ENCODE measurements at regions of chrX and their contacts with region 1.

Region 1: DNA sequence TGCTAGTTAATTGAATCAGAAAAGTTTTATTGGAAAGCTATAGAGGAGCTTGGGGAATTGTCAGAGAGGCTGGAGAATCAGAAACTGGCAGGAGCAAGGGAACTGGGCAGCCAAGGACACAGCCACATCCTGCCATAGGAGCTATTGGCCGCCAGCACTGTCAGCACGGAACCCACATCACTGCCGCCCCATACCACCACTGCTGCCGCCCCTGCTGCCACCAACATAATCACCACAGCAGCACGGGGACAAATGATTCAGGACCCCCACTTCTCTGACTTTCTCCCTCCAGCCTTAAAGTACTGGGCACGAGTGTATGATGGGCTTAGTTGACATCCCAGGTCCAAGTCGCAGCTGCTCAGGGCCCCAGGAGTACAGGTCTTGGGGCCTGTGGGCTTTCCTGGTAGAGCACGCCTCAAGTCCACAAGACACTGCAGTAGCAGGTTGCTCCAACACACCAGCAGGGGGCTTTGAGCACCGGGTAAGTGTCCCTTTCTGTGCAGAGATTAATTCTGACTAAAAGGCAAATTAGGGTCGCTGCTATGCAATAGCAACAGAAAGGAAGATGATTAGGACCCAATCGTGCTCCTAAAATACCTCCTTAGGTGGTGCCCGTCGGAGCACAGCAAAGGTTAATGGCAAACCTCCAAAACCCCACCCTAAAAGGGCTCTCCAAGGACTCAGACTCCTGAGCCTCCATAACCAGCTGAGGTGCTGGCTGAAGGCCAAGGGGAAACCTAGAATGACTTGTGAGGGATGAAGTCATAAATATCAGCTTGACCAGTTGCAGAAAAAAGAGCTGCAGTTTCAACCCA is 6.9 kb downstream of the PJA1 start:
- DNase-seq: peak; percentile 85
- H3K4me3 ChIP-seq: no peak overlapping the region
- H3K27ac ChIP-seq: peak overlapping the region in 3 of 4 donors; percentile 22 to 34 (median 30)
- H3K4me1 ChIP-seq: peaks cover 0 to 18% (median 11%) of the 10 kb centered on the region in 4 donors
- H3K27me3 ChIP-seq: no peaks in the 10 kb centered on the region
- CTCF ChIP-seq: peak; percentile 18 to 51 (median 32)
- EP300 ChIP-seq: no peak
- POLR2A ChIP-seq: no peak

Region 2: GRCh38 chrX:69093960-69094871 is 64.2 kb before region 1 on chrX:
- intact Hi-C with region 1: no loop called
- DNase-seq: peak; percentile 74
- H3K4me3 ChIP-seq: no peak overlapping the region
- H3K27ac ChIP-seq: no peak overlapping the region
- H3K4me1 ChIP-seq: no peaks in the 10 kb centered on the region
- H3K27me3 ChIP-seq: no peaks in the 10 kb centered on the region
- CTCF ChIP-seq: peak in 2 of 4 experiments; percentile 40 to 49
- EP300 ChIP-seq: no peak
- POLR2A ChIP-seq: no peak

Region 3: GRCh38 chrX:69109683-69110082 is 48.7 kb before region 1 on chrX:
- intact Hi-C with region 1: no loop called
- DNase-seq: no peak
- H3K4me3 ChIP-seq: no peak overlapping the region
- H3K27ac ChIP-seq: peak overlapping the region in 2 of 4 donors; percentile 37 to 41
- H3K4me1 ChIP-seq: peaks cover 0 to 11% (median 5%) of the 10 kb centered on the region in 4 donors
- H3K27me3 ChIP-seq: peaks cover 0 to 3% (median 0%) of the 10 kb centered on the region in 3 donors
- CTCF ChIP-seq: no peak
- EP300 ChIP-seq: no peak
- POLR2A ChIP-seq: no peak

Region 4: DNA sequence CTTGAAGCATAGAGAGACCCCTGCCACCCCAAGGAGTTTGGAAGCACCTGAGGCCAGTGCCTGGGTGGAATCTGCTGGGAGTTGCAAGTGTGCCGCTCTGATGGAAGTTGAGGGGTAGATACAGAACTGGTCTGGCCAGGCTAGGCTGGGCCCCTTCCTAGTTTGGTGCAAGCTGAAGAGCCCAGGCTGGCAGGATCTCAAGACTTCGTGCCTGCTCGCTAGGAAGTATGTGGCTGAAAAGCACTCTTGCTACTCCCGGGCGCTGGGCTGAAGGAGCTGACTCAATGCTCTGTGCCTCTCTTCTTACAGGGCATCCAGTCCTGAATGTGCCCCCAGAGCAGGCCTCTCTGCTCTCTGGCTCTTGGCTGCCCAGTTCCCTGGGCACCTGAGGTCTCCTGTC is 58.5 kb after region 1 on chrX:
- intact Hi-C with region 1: loop called (anchors 5 kb)
- DNase-seq: peak; percentile 78
- H3K4me3 ChIP-seq: no peak overlapping the region
- H3K27ac ChIP-seq: peak overlapping the region; percentile 59 to 71 (median 70)
- H3K4me1 ChIP-seq: peaks cover 0 to 11% (median 7%) of the 10 kb centered on the region in 4 donors
- H3K27me3 ChIP-seq: no peaks in the 10 kb centered on the region
- CTCF ChIP-seq: no peak
- EP300 ChIP-seq: no peak
- POLR2A ChIP-seq: no peak